PC-3 (cell line): ENCODE measurements at regions of chr14 and their contacts with region 1.

Region 1: DNA sequence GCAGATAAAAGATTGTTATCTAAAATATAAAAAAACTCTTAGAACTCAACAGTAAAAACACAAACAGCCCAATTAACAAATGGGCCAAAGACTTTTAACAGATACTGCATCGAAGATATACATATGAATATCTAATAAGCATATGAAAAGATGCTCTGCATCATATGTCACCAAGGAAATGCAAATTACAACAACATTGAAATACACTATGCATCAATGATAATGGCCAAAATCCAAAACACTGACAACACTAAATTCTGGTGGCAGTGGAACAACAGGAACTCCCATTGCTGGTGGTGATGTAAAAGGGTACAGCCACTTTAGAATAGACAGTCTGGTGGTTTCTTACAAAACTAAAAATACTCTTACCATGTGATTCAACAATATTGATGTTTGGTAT is 40.8 kb downstream of the KLHDC2 start:
- DNase-seq: no peak
- ATAC-seq: no peak
- H3K4me3 ChIP-seq: no peak overlapping the region
- H3K27ac ChIP-seq: no peak overlapping the region
- H3K4me1 ChIP-seq: no peaks in the 10 kb centered on the region
- H3K27me3 ChIP-seq: no peaks in the 10 kb centered on the region
- CTCF ChIP-seq: no peak

Region 2: GRCh38 chr14:48943913-48944312 is 864.9 kb before region 1 on chr14:
- CTCF ChIA-PET with region 1: no interaction called
- POLR2A ChIA-PET with region 1: no interaction called
- intact Hi-C with region 1: no loop called
- DNase-seq: no peak
- ATAC-seq: no peak
- H3K4me3 ChIP-seq: no peak overlapping the region
- H3K27ac ChIP-seq: no peak overlapping the region
- H3K4me1 ChIP-seq: no peaks in the 10 kb centered on the region
- H3K27me3 ChIP-seq: no peaks in the 10 kb centered on the region
- CTCF ChIP-seq: no peak

Region 3: GRCh38 chr14:49008363-49008762 is 800.4 kb before region 1 on chr14:
- CTCF ChIA-PET with region 1: no interaction called
- POLR2A ChIA-PET with region 1: no interaction called
- intact Hi-C with region 1: no loop called
- DNase-seq: no peak
- ATAC-seq: no peak
- H3K4me3 ChIP-seq: no peak overlapping the region
- H3K27ac ChIP-seq: no peak overlapping the region
- H3K4me1 ChIP-seq: no peaks in the 10 kb centered on the region
- H3K27me3 ChIP-seq: peaks cover 35% of the 10 kb centered on the region
- CTCF ChIP-seq: no peak

Region 4: DNA sequence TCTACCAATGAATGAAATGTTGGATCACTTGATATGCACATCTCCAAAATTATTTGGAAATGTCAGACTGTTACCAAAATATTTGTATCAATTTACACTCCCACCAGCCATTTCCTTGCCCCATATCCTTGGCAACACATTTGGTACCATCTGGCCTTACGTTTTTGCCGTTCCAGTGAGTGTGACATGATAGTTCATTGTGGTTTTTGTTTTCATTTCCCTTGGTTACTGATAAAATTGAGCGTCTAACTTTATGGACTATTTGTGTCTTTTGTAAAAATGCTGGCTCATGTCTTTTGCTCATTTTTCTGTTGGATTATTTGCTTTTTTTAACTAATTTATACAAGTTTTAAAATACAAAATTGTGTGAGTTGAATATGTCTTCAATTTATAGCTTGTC is 104.8 kb before region 1 on chr14:
- CTCF ChIA-PET with region 1: no interaction called
- POLR2A ChIA-PET with region 1: no interaction called
- intact Hi-C with region 1: no loop called
- DNase-seq: no peak
- ATAC-seq: no peak
- H3K4me3 ChIP-seq: no peak overlapping the region
- H3K27ac ChIP-seq: no peak overlapping the region
- H3K4me1 ChIP-seq: no peaks in the 10 kb centered on the region
- H3K27me3 ChIP-seq: no peaks in the 10 kb centered on the region
- CTCF ChIP-seq: no peak

Region 5: DNA sequence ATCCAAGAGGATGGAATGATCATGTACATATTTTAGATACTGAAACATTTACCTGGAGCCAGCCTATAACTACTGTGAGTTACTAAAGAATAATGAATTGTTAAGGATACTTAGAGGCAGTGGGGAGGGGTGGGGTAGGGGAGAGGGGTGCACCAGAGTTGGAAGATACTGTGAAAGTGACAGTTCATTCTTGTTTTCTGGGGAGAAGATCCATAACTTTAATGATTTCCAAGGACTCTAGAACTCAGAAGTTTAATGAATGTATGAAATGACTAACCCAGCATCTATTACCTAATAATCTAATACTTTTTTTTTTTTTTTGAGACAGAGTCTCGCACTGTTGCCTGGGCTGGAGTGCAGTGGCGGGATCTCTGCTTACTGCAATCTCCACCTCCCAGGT is 30.4 kb before region 1 on chr14:
- CTCF ChIA-PET with region 1: no interaction called
- POLR2A ChIA-PET with region 1: no interaction called
- intact Hi-C with region 1: loop called (anchors 5 kb)
- DNase-seq: no peak
- ATAC-seq: no peak
- H3K4me3 ChIP-seq: no peak overlapping the region
- H3K27ac ChIP-seq: no peak overlapping the region
- H3K4me1 ChIP-seq: no peaks in the 10 kb centered on the region
- H3K27me3 ChIP-seq: no peaks in the 10 kb centered on the region
- CTCF ChIP-seq: no peak

Region 6: GRCh38 chr14:50085570-50086320 is 277.0 kb after region 1 on chr14:
- CTCF ChIA-PET with region 1: no interaction called
- POLR2A ChIA-PET with region 1: no interaction called
- intact Hi-C with region 1: no loop called
- DNase-seq: peak; percentile 53
- ATAC-seq: peak; percentile 88
- H3K4me3 ChIP-seq: no peak overlapping the region
- H3K27ac ChIP-seq: no peak overlapping the region
- H3K4me1 ChIP-seq: 0 out of 2 replicates have a peak, but pooled peaks cover 4% of the 10 kb centered on the region
- H3K27me3 ChIP-seq: no peaks in the 10 kb centered on the region
- CTCF ChIP-seq: no peak